Activated B cell treated with CpG ODN at 0.5 μM for 24 hours (primary cell): ENCODE measurements at regions of chr6 and their contacts with region 1.

Region 1: GRCh38 chr6:33288921-33289748 is at the starts of genes PFDN6 and WDR46:
- DNase-seq: peak; percentile 66
- ATAC-seq: peak; percentile 94
- H3K4me3 Mint-ChIP-seq: peak within 1 kb of the TSS; percentile 100
- H3K27ac Mint-ChIP-seq: peak within 1 kb of the TSS; percentile 95
- H3K4me1 Mint-ChIP-seq: peaks cover 48% of the 10 kb centered on the region
- H3K27me3 Mint-ChIP-seq: no peaks in the 10 kb centered on the region
- CTCF ChIP-seq: no peak
- total RNA-seq, gene PFDN6: 82.8 and 95.1 TPM in 2 replicates
- total RNA-seq, gene WDR46: 114 and 117 TPM in 2 replicates

Region 2: GRCh38 chr6:33069021-33069738 is 220.0 kb before region 1 on chr6:
- CTCF ChIA-PET with region 1: no interaction called
- POLR2A ChIA-PET with region 1: no interaction called
- intact Hi-C with region 1: no loop called
- DNase-seq: no peak
- ATAC-seq: no peak
- H3K4me3 Mint-ChIP-seq: peak overlapping the region; percentile 97
- H3K27ac Mint-ChIP-seq: peak overlapping the region; percentile 99
- H3K4me1 Mint-ChIP-seq: peaks cover 75% of the 10 kb centered on the region
- H3K27me3 Mint-ChIP-seq: no peaks in the 10 kb centered on the region
- CTCF ChIP-seq: no peak

Region 3: GRCh38 chr6:33213989-33214335 is 75.2 kb before region 1 on chr6:
- CTCF ChIA-PET with region 1: no interaction called
- POLR2A ChIA-PET with region 1: no interaction called
- intact Hi-C with region 1: no loop called
- DNase-seq: no peak
- ATAC-seq: no peak
- H3K4me3 Mint-ChIP-seq: peak overlapping the region; percentile 67
- H3K27ac Mint-ChIP-seq: no peak overlapping the region
- H3K4me1 Mint-ChIP-seq: peaks cover 22% of the 10 kb centered on the region
- H3K27me3 Mint-ChIP-seq: peaks cover 38% of the 10 kb centered on the region
- CTCF ChIP-seq: no peak

Region 4: DNA sequence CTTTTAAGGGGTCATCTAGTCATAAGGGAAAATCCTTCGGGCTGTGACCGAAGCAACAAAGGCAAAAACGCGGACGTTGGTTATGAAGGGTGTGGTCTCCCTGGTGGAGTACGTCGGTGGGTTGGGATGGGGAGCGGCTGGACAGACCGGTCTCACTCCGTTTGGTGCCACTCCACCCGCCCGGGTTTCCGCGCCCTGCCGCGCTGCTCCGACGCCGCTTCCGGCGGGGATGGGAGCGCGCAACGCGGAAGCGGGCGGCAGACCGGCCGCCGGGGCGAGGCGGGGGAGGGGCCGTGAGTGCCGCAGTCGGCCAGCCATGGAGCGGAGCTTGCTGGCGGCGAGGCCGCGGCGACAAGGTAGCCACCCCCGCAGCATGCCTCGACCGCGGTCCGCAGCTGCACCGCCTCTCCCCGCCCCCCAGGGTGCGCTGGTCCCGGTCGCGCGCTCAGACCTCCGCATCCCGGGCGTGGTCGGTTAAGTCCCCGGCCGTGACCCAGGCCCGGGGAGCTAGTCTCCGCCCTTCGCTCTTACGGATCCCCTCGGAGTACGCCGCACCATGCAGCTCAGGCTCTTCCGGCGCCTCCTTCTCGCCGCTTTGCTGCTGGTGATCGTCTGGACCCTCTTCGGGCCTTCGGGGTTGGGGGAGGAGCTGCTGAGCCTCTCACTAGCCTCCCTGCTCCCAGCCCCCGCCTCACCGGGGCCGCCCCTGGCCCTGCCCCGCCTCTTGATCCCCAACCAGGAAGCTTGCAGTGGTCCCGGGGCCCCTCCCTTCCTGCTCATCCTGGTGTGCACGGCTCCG is 12.1 kb before region 1 on chr6 and contains the start of gene B3GALT4:
- CTCF ChIA-PET with region 1: interaction called, 21 read pairs
- POLR2A ChIA-PET with region 1: interaction called, 80 read pairs
- intact Hi-C with region 1: loop called (anchors 1 kb)
- DNase-seq: peak; percentile 77
- ATAC-seq: peak; percentile 68
- H3K4me3 Mint-ChIP-seq: peak within 1 kb of the TSS; percentile 92
- H3K27ac Mint-ChIP-seq: peak within 1 kb of the TSS; percentile 100
- H3K4me1 Mint-ChIP-seq: peaks cover 62% of the 10 kb centered on the region
- H3K27me3 Mint-ChIP-seq: no peaks in the 10 kb centered on the region
- CTCF ChIP-seq: no peak
- total RNA-seq, gene B3GALT4: 19.1 and 19.4 TPM in 2 replicates

Region 5: DNA sequence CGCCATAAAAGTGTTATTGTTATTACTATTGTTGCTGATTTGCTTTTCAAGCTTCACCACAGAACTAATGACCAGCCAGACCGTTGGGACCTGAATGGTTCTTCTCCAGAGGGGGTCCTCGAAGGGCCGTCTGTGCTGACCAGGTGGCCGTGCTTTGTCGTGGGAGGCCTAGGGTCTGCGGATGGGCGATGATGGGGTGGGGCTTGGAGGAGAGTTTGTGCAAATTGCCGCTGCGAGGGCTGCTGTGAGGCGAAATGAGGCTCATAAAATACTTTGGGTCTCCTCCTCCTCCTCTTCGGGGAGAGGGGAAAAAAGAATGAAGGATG is 34.5 kb after region 1 on chr6:
- CTCF ChIA-PET with region 1: no interaction called
- POLR2A ChIA-PET with region 1: interaction called, 17 read pairs
- intact Hi-C with region 1: loop called (anchors 1 kb)
- DNase-seq: peak; percentile 38
- ATAC-seq: no peak
- H3K4me3 Mint-ChIP-seq: peak overlapping the region; percentile 95
- H3K27ac Mint-ChIP-seq: peak overlapping the region; percentile 93
- H3K4me1 Mint-ChIP-seq: peaks cover 61% of the 10 kb centered on the region
- H3K27me3 Mint-ChIP-seq: no peaks in the 10 kb centered on the region
- CTCF ChIP-seq: no peak

Region 6: GRCh38 chr6:33425668-33426577 is 136.8 kb after region 1 on chr6:
- CTCF ChIA-PET with region 1: no interaction called
- POLR2A ChIA-PET with region 1: interaction called, 13 read pairs
- intact Hi-C with region 1: no loop called
- DNase-seq: peak; percentile 68
- ATAC-seq: peak; percentile 60
- H3K4me3 Mint-ChIP-seq: peak overlapping the region; percentile 87
- H3K27ac Mint-ChIP-seq: peak overlapping the region; percentile 89
- H3K4me1 Mint-ChIP-seq: peaks cover 66% of the 10 kb centered on the region
- H3K27me3 Mint-ChIP-seq: no peaks in the 10 kb centered on the region
- CTCF ChIP-seq: no peak

Region 7: DNA sequence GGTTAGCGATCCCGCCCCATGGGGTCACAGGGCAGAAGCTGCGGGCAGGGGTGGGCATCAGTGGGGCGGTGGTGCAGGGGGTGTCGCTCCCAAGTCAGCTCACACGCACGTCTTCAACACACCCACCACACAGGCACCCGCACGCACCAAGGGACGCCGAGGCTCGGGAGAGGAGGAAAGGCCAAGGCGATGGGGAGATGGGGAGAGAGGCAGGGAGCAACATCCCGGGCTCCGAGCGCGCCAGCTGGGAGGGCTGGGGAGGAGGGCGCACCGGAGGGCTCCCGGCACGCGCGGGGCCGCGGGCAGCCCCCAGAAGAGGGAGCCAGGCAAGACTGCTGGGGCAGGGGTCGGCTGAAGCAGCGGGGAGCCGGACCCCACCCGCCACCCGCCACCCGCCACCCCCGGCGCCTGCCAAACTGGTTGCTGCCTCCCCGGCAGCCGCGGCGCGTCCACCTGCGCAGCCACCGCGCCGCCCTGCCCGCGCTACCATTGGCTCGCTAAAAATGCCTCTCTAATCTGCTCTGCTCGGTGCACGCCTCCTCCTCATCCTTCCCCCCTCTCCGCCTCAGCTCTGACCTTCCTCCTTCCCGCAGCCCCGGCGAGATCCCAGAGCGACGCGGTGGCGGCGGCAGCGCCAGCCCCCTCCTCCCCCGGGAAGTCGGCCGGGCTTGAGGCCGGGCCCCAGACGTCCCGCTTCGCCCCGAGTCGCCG is 1176.6 kb after region 1 on chr6 and contains the start of gene PACSIN1:
- CTCF ChIA-PET with region 1: no interaction called
- POLR2A ChIA-PET with region 1: no interaction called
- intact Hi-C with region 1: no loop called
- DNase-seq: no peak
- ATAC-seq: peak; percentile 52
- H3K4me3 Mint-ChIP-seq: peak within 1 kb of the TSS; percentile 76
- H3K27ac Mint-ChIP-seq: no peak within 1 kb of the TSS
- H3K4me1 Mint-ChIP-seq: peaks cover 29% of the 10 kb centered on the region
- H3K27me3 Mint-ChIP-seq: peaks cover 17% of the 10 kb centered on the region
- CTCF ChIP-seq: no peak
- total RNA-seq, gene PACSIN1: 0.11 and 0.20 TPM in 2 replicates